ENCODE measurements at regions of chr18 and their contacts with region 1.

Region 1: DNA sequence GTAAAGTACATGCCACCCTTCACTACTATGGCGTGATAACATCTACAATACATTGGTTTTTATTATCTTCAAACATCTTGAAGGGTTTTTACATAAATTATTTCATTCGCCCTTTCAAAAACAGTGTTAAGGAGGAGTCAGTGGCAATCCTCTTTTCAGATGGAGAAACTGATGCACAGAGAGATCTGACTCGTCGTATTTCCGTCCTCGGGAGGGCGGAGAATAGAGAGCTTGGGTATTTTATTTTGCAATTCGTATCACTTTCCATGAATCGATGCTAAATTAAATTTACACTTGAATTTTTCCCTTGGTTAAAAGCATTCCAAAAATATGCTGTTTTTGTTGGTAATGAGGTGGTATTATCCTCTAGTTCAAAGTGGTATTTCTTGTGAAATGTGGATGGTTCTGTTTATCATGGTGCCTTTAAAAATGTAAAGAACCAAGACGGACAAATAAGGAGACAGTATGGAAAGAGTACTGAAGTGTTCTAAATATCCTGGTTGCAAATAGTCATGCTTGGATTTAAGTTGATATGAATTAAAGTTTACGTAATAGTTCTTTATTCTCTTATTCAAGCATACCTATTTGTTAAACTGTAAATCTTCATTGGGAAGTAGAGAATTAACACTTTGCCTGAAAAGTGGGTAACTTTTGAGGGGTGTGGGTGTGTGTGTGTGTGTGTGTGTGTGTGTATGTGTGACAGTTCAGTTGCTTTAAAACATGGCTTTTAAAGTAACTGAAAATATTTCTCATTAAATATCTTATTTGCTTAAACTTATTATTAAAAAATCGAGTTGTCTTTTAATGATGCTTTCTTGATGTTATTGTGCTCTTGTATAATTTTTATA is 5.6 kb downstream of the PHLPP1 start:
- DNase-seq: peak; percentile 23
- ATAC-seq: no peak
- H3K4me3 Mint-ChIP-seq: no peak overlapping the region
- H3K27ac Mint-ChIP-seq: no peak overlapping the region
- H3K4me1 Mint-ChIP-seq: peaks cover 37% of the 10 kb centered on the region
- H3K27me3 Mint-ChIP-seq: peaks cover 5% of the 10 kb centered on the region

Region 2: DNA sequence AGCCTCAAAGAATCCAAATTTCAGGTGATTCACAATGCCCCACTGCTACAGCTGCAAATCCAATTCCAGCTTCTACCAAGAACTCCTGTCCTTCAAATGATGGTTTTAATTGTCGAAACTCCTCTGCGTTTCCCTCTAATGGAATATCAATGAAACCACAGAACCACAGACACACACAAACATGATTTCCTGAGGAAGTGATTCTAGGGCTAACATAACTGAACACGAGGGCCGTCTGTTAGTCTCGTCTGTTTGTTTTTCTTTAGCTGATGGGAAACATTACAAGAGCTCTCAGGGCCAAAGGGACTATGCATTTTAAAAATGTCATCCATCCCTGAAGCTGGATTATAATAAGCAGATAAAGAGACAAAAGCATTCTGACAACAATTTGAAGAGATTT is 887.6 kb before region 1 on chr18:
- CTCF ChIA-PET with region 1: no interaction called
- POLR2A ChIA-PET with region 1: no interaction called
- intact Hi-C with region 1: no loop called
- DNase-seq: no peak
- ATAC-seq: no peak
- H3K4me3 Mint-ChIP-seq: no peak overlapping the region
- H3K27ac Mint-ChIP-seq: peak overlapping the region; percentile 28
- H3K4me1 Mint-ChIP-seq: peaks cover 17% of the 10 kb centered on the region
- H3K27me3 Mint-ChIP-seq: peaks cover 1% of the 10 kb centered on the region

Region 3: DNA sequence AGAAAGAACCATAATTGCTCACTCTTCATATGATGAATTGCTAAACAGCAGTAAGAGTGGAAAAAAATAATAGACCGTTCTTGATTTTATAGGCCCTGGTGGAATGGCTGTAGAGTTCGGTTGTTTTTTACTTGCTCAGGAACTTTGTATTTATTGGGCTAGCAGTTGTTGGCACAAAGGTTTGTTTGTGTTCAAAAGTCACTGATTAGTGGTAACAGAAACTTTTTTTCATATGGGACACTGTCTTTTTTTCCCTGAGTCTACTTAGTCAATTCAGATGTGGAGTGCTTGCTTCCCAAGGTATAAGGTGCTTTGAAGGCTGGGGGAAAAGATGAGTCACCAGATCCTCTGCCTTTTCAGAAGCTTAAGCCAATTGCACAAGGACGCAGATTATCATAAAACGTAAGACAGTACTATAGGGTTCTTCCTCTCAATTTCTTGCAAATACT is 20.2 kb after region 1 on chr18:
- CTCF ChIA-PET with region 1: interaction called, 10 read pairs
- POLR2A ChIA-PET with region 1: no interaction called
- intact Hi-C with region 1: no loop called
- DNase-seq: peak; percentile 57
- ATAC-seq: peak; percentile 85
- H3K4me3 Mint-ChIP-seq: no peak overlapping the region
- H3K27ac Mint-ChIP-seq: no peak overlapping the region
- H3K4me1 Mint-ChIP-seq: peaks cover 14% of the 10 kb centered on the region
- H3K27me3 Mint-ChIP-seq: no peaks in the 10 kb centered on the region

Measured in activated CD4-positive, alpha-beta T cell treated with anti-CD3 and anti-CD28 coated beads for 36 hours (primary cell).